Common myeloid progenitor, CD34-positive (primary cell): ENCODE measurements at regions of chr17 and their contacts with region 1.

Region 1: GRCh38 chr17:44878627-44879221 is 20.5 kb downstream of the EFTUD2 start:
- DNase-seq: peak; percentile 30 to 60 (median 51)
- H3K4me3 ChIP-seq: no peak overlapping the region
- H3K27ac ChIP-seq: no peak overlapping the region
- H3K4me1 ChIP-seq: no peaks in the 10 kb centered on the region
- H3K27me3 ChIP-seq: no peaks in the 10 kb centered on the region

Region 2: DNA sequence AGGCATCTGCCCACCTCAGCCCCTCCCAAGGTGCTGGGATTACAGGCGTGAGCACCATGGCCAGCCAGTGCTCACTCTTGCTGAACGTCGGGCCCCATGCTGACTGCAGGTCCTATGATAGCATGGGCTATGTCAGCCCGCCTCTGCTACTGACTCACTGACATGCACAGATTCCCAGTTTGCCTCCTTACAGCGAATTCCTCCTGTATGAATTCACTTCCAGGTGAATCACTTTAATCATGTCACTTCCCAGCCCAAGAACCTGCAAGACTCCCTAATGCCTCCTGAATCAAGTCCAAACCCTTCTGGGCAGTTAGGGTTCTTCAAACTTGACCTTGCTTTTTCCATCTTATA is 643.2 kb before region 1 on chr17:
- CTCF ChIA-PET with region 1: no interaction called
- POLR2A ChIA-PET with region 1: no interaction called
- DNase-seq: no peak
- H3K4me3 ChIP-seq: no peak overlapping the region
- H3K27ac ChIP-seq: no peak overlapping the region
- H3K4me1 ChIP-seq: peaks cover 0 to 6% (median 3%) of the 10 kb centered on the region in 4 experiments
- H3K27me3 ChIP-seq: no peaks in the 10 kb centered on the region

Region 3: GRCh38 chr17:44710059-44710336 is 168.7 kb before region 1 on chr17:
- CTCF ChIA-PET with region 1: no interaction called
- POLR2A ChIA-PET with region 1: no interaction called
- DNase-seq: no peak
- H3K4me3 ChIP-seq: no peak overlapping the region
- H3K27ac ChIP-seq: no peak overlapping the region
- H3K4me1 ChIP-seq: peaks cover 13 to 19% (median 16%) of the 10 kb centered on the region in 4 experiments
- H3K27me3 ChIP-seq: no peaks in the 10 kb centered on the region

Region 4: GRCh38 chr17:44864866-44865660 is 13.7 kb before region 1 on chr17:
- CTCF ChIA-PET with region 1: interaction called, 36 read pairs
- POLR2A ChIA-PET with region 1: no interaction called
- DNase-seq: peak; percentile 72 to 86 (median 78)
- H3K4me3 ChIP-seq: no peak overlapping the region
- H3K27ac ChIP-seq: no peak overlapping the region
- H3K4me1 ChIP-seq: no peaks in the 10 kb centered on the region
- H3K27me3 ChIP-seq: no peaks in the 10 kb centered on the region

Region 5: GRCh38 chr17:44899069-44899782 is 20.5 kb after region 1 on chr17 and contains the start of gene EFTUD2:
- CTCF ChIA-PET with region 1: interaction called, 12 read pairs
- POLR2A ChIA-PET with region 1: no interaction called
- DNase-seq: peak; percentile 92 to 95 (median 94)
- H3K4me3 ChIP-seq: peak within 1 kb of the TSS; percentile 90 to 99 (median 92)
- H3K27ac ChIP-seq: peak within 1 kb of the TSS; percentile 99 to 100
- H3K4me1 ChIP-seq: peaks cover 12 to 33% (median 25%) of the 10 kb centered on the region in 4 experiments
- H3K27me3 ChIP-seq: no peaks in the 10 kb centered on the region

Region 6: DNA sequence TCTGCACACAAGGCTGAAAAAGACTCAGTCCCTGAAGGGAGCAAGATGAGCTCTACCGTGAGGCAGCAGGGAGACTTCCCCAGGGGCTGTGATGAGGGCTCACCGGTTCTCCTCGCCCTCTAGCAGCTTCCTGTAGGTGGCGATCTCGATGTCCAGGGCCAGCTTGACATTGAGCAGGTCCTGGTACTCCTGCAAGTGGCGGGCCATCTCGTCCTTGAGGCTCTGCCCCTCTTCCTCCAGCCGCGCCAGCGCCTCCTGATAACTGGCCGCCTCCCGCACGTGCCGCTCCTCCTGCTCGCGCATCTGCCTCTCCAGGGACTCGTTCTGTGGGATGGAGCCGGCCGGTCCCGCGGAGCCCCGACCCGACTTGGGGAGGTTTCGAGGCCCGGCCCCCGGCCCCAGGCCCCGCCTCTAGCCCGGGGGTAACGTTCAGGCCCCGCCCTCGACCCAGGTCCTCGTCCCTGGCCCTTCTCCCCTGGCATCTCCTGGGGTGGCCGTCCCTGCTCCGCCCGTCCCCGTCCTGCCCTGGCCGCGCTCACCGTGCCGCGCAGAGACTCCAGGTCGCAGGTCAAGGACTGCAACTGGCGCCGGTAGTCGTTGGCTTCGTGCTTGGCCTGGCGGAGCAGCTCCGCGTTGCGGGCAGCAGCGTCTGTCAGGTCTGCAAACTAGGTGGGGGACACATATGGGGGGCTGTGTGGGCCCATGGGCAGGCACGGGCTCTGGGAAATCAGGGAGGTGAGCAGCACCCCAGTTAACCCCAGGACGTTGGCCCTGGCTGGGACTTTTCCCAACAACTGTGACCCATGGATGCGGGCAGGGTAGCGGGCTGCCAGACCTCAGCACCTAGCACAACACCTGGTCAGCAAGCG is 32.6 kb after region 1 on chr17:
- CTCF ChIA-PET with region 1: no interaction called
- POLR2A ChIA-PET with region 1: no interaction called
- DNase-seq: peak; percentile 43 to 66 (median 64)
- H3K4me3 ChIP-seq: peak overlapping the region in 4 of 7 experiments; percentile 12 to 51 (median 44)
- H3K27ac ChIP-seq: no peak overlapping the region
- H3K4me1 ChIP-seq: peaks cover 0 to 10% (median 7%) of the 10 kb centered on the region in 4 experiments
- H3K27me3 ChIP-seq: peaks cover 0 to 48% (median 21%) of the 10 kb centered on the region in 5 experiments

Region 7: GRCh38 chr17:44941712-44942331 is 63.1 kb after region 1 on chr17:
- CTCF ChIA-PET with region 1: no interaction called
- POLR2A ChIA-PET with region 1: no interaction called
- DNase-seq: no peak
- H3K4me3 ChIP-seq: no peak overlapping the region
- H3K27ac ChIP-seq: no peak overlapping the region
- H3K4me1 ChIP-seq: peaks cover 4 to 7% (median 7%) of the 10 kb centered on the region in 4 experiments
- H3K27me3 ChIP-seq: no peaks in the 10 kb centered on the region